Heart left ventricle (tissue), 16 donors: ENCODE measurements at regions of chr10 and their contacts with region 1.

Region 1: GRCh38 chr10:12710594-12711349 is 290.7 kb downstream of the CCDC3 start:
- DNase-seq: peak; percentile 64 to 81 (median 69)
- ATAC-seq: peak; percentile 48 to 81 (median 74)
- H3K4me3 ChIP-seq: no peak overlapping the region
- H3K27ac ChIP-seq: peak overlapping the region in 2 of 12 donors; percentile 1 to 78
- H3K4me1 ChIP-seq: peaks cover 0 to 48% (median 23%) of the 10 kb centered on the region in 12 donors
- H3K27me3 ChIP-seq: no peaks in the 10 kb centered on the region
- CTCF ChIP-seq: peak; percentile 86 to 95 (median 90)
- POLR2A ChIP-seq: no peak

Region 2: GRCh38 chr10:12214763-12215218 is 496.0 kb before region 1 on chr10:
- intact Hi-C with region 1: loop called in 3 of 10 experiments (anchors 2 to 5 kb)
- DNase-seq: no peak
- ATAC-seq: peak in 2 of 4 donors; percentile 22 to 34
- H3K4me3 ChIP-seq: peak overlapping the region in 5 of 12 donors; percentile 11 to 35 (median 14)
- H3K27ac ChIP-seq: peak overlapping the region in 2 of 12 donors; percentile 33 to 45
- H3K4me1 ChIP-seq: peaks cover 0 to 21% (median 10%) of the 10 kb centered on the region in 12 donors
- H3K27me3 ChIP-seq: no peaks in the 10 kb centered on the region
- CTCF ChIP-seq: peak; percentile 60 to 78 (median 70)
- POLR2A ChIP-seq: no peak

Region 3: GRCh38 chr10:12264204-12264940 is 446.4 kb before region 1 on chr10:
- intact Hi-C with region 1: loop called (anchors 1 to 2 kb)
- DNase-seq: peak; percentile 63 to 86 (median 77)
- ATAC-seq: peak; percentile 75 to 91 (median 88)
- H3K4me3 ChIP-seq: peak overlapping the region in 10 of 12 donors; percentile 28 to 55 (median 40)
- H3K27ac ChIP-seq: peak overlapping the region in 5 of 12 donors; percentile 59 to 84 (median 67)
- H3K4me1 ChIP-seq: peaks cover 0 to 35% (median 0%) of the 10 kb centered on the region in 12 donors
- H3K27me3 ChIP-seq: no peaks in the 10 kb centered on the region
- CTCF ChIP-seq: peak; percentile 73 to 95 (median 90)
- POLR2A ChIP-seq: no peak

Region 4: GRCh38 chr10:12350167-12350872 is 360.5 kb before region 1 on chr10:
- intact Hi-C with region 1: loop called in 1 of 10 experiments (anchors 5 kb)
- DNase-seq: peak in 4 of 5 donors; percentile 16 to 74 (median 40)
- ATAC-seq: peak in 3 of 4 donors; percentile 24 to 41 (median 38)
- H3K4me3 ChIP-seq: peak overlapping the region; percentile 45 to 94 (median 82)
- H3K27ac ChIP-seq: peak overlapping the region in 11 of 12 donors; percentile 17 to 90 (median 73)
- H3K4me1 ChIP-seq: peaks cover 0 to 34% (median 14%) of the 10 kb centered on the region in 12 donors
- H3K27me3 ChIP-seq: peaks cover 0 to 7% (median 0%) of the 10 kb centered on the region in 9 donors
- CTCF ChIP-seq: no peak
- POLR2A ChIP-seq: no peak

Region 5: DNA sequence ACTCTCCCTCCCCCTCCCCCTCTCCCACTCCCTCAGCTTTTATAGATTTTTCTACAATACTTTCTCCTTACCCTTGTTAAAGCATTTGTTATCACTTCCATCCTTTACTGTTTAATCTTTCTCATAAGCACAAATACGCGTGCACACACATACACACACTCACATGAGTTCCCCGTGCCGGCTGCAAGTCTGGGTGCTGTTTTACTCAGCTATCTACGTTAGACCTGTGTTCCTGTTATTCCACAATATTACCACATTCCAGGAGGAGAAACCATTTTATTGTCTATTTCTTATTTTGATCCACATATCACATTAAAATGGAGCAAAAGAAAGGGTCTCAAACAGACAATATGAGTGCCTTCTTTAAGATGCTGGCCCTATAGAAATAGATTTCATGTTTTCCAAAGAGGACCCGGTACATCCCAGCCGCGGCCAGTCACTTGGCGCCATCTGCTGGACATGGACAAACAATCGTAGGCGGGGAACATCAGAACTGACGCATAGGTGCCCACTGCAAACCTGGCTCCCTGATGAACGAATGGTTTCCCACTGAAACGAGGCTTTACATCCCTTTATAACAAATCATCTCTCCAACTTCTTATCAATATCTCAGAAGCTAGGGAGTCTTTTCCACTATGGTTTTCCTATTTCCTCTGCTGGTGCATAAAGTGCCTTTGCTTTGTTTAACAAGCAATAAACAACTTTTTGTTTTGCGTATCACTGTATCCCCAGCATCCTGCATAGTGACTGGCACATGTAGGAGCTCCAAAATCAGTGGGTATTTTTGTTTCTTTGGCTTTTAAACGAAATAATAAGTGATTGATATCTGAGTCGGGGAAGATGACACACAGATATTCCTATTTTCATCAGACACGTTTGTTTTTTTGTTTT is 364.0 kb after region 1 on chr10:
- intact Hi-C with region 1: loop called in 7 of 10 experiments (anchors 5 to 10 kb)
- DNase-seq: peak; percentile 55 to 72 (median 60)
- ATAC-seq: peak in 3 of 4 donors; percentile 72 to 82 (median 80)
- H3K4me3 ChIP-seq: no peak overlapping the region
- H3K27ac ChIP-seq: no peak overlapping the region
- H3K4me1 ChIP-seq: no peaks in the 10 kb centered on the region
- H3K27me3 ChIP-seq: peaks cover 0 to 15% (median 3%) of the 10 kb centered on the region in 9 donors
- CTCF ChIP-seq: peak; percentile 66 to 90 (median 80)
- POLR2A ChIP-seq: no peak

Region 6: DNA sequence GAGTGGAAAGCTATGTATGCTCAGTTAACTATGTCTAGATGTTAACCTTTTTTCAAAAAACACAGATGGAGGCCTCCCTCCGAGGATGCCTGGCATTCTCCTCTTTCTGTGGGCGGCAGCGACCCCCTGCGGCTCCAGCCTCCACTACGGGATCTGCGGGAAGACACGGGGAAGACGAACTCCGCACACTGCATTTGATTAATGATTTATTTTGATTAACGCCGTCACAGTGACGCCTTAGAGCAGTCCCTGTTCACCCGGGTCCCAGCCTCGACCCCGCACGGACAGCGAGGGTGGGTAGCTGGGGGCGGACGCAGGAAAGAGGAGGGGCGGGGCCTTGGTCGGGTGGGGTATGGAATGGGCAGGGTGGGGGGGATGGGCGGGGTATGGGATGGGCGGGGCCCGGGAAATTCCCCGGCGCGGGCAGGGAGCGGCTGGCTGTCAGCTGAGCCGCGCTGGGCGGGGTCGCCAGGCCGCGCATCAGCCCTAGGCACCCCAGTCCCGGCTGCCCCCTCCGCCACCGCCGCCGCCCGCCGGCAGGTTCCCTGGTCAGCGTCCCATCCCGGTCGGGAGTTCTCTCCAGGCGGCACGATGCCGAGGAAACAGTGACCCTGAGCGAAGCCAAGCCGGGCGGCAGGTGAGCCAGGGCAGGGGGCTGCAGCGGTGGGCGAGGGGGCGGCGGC is 389.0 kb after region 1 on chr10 and contains the start of gene OPTN:
- intact Hi-C with region 1: loop called in 2 of 10 experiments (anchors 10 kb)
- DNase-seq: peak; percentile 81 to 88 (median 87)
- ATAC-seq: peak; percentile 76 to 93 (median 91)
- H3K4me3 ChIP-seq: peak within 1 kb of the TSS; percentile 78 to 98 (median 94)
- H3K27ac ChIP-seq: peak within 1 kb of the TSS; percentile 86 to 99 (median 96)
- H3K4me1 ChIP-seq: peaks cover 0 to 39% (median 23%) of the 10 kb centered on the region in 12 donors
- H3K27me3 ChIP-seq: no peaks in the 10 kb centered on the region
- CTCF ChIP-seq: peak; percentile 45 to 90 (median 70)
- POLR2A ChIP-seq: peak in 1 of 2 donors; percentile 79
- total RNA-seq, gene OPTN: 89.4 to 191 (median 140) TPM